HepG2 (cell line): ENCODE measurements at regions of chr11 and their contacts with region 1.

Region 1: GRCh38 chr11:32792948-32793475 is 1.4 kb downstream of the CCDC73 start:
- DNase-seq: peak; percentile 21
- ATAC-seq: peak; percentile 78
- H3K4me3 ChIP-seq: peak overlapping the region in 1 of 3 experiments; percentile 10; a peak in 1 of 6 replicates
- H3K27ac ChIP-seq: no peak overlapping the region
- H3K4me1 ChIP-seq: no peaks in the 10 kb centered on the region
- H3K27me3 ChIP-seq: peaks cover 0 to 5% of the 10 kb centered on the region in 2 experiments; a peak in 2 of 5 replicates
- CTCF ChIP-seq: peak; percentile 77
- EP300 ChIP-seq: no peak
- POLR2A ChIP-seq: no peak
- RAD21 ChIP-seq: peak; percentile 50; the same call in 1 of the 2 replicates

Region 2: GRCh38 chr11:32323814-32324130 is 469.2 kb before region 1 on chr11:
- CTCF ChIA-PET with region 1: interaction called, 4 read pairs
- POLR2A ChIA-PET with region 1: no interaction called
- in situ Hi-C with region 1: no loop called
- intact Hi-C with region 1: loop called (anchors 2 kb)
- DNase-seq: no peak
- ATAC-seq: no peak
- H3K4me3 ChIP-seq: no peak overlapping the region
- H3K27ac ChIP-seq: no peak overlapping the region
- H3K4me1 ChIP-seq: no peaks in the 10 kb centered on the region
- H3K27me3 ChIP-seq: peaks cover 0 to 20% of the 10 kb centered on the region in 2 experiments; a peak in 1 of 5 replicates
- CTCF ChIP-seq: no peak
- EP300 ChIP-seq: no peak
- POLR2A ChIP-seq: no peak
- RAD21 ChIP-seq: no peak

Region 3: GRCh38 chr11:32434356-32435151 is 358.5 kb before region 1 on chr11:
- CTCF ChIA-PET with region 1: interaction called, 3 read pairs
- POLR2A ChIA-PET with region 1: no interaction called
- in situ Hi-C with region 1: no loop called
- intact Hi-C with region 1: loop called (anchors 5 kb)
- DNase-seq: peak; percentile 5
- ATAC-seq: peak; percentile 83
- H3K4me3 ChIP-seq: peak overlapping the region; percentile 49 to 68 (median 57); a peak in 5 of 6 replicates
- H3K27ac ChIP-seq: no peak overlapping the region
- H3K4me1 ChIP-seq: 0 out of 2 replicates have a peak, but pooled peaks cover 7% of the 10 kb centered on the region
- H3K27me3 ChIP-seq: peaks cover 11 to 83% of the 10 kb centered on the region in 2 experiments
- CTCF ChIP-seq: peak; percentile 34
- EP300 ChIP-seq: no peak
- POLR2A ChIP-seq: no peak
- RAD21 ChIP-seq: no peak

Region 4: GRCh38 chr11:32448232-32448631 is 344.8 kb before region 1 on chr11:
- CTCF ChIA-PET with region 1: no interaction called
- POLR2A ChIA-PET with region 1: no interaction called
- in situ Hi-C with region 1: no loop called
- intact Hi-C with region 1: loop called (anchors 2 kb)
- DNase-seq: peak; percentile 31
- ATAC-seq: peak; percentile 69
- H3K4me3 ChIP-seq: no peak overlapping the region
- H3K27ac ChIP-seq: no peak overlapping the region
- H3K4me1 ChIP-seq: peaks cover 7% of the 10 kb centered on the region; the same call in 1 of the 2 replicates
- H3K27me3 ChIP-seq: peaks cover 0 to 2% of the 10 kb centered on the region in 2 experiments; a peak in 1 of 5 replicates
- CTCF ChIP-seq: 0 out of 2 replicates have a peak, but pooled peaks have one; percentile 13
- EP300 ChIP-seq: no peak
- POLR2A ChIP-seq: no peak
- RAD21 ChIP-seq: no peak

Region 5: DNA sequence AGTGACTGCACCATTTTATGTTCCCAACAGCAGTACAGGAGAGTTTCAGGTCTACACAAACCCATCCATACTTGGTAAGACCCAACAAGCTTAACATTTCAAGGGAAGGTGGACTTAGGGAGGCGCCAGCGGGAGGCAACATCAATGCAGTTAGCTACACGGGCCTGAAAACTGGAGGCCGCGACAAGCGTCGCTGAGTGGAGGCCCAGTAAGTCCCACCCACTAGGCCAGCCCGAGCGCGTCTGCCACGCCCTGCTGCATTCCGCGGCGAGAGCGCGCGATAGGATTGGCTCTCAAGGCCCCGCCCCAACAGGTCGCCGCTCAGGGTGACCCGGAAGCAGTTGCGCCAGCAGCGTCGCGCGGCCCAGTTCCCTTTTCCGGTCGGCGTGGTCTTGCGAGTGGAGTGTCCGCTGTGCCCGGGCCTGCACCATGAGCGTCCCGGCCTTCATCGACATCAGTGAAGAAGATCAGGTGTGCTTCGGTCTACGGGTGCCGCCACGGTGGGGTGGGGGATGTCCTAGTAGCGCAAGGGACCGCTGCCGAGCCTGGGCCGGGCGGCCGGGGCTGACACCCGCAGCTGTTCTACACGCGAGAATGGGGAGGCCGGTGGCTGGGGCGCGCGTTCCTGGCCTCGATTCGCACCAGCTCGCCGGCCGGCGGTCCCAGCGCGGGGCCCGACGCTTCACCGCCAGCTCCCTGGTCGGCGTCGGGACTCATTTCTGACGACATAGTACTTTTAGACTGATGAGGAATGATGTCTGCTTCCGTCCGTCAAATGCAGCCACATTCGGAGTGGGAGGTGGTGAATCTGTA is 209.3 kb before region 1 on chr11 and contains the start of gene EIF3M:
- CTCF ChIA-PET with region 1: no interaction called
- POLR2A ChIA-PET with region 1: no interaction called
- in situ Hi-C with region 1: no loop called
- intact Hi-C with region 1: loop called (anchors 1 kb)
- DNase-seq: peak; percentile 91
- ATAC-seq: peak; percentile 98
- H3K4me3 ChIP-seq: peak within 1 kb of the TSS; percentile 66 to 99 (median 88)
- H3K27ac ChIP-seq: peak within 1 kb of the TSS; percentile 82
- H3K4me1 ChIP-seq: peaks cover 48% of the 10 kb centered on the region
- H3K27me3 ChIP-seq: no peaks in the 10 kb centered on the region; a peak in 1 of 5 replicates
- CTCF ChIP-seq: no peak
- EP300 ChIP-seq: no peak
- POLR2A ChIP-seq: peak; percentile 83 to 85
- RAD21 ChIP-seq: no peak; the same call in 1 of the 2 replicates
- total RNA-seq, gene EIF3M: 389 and 593 TPM in 2 replicates

Region 6: GRCh38 chr11:32713496-32713895 is 79.5 kb before region 1 on chr11:
- CTCF ChIA-PET with region 1: interaction called, 5 read pairs
- POLR2A ChIA-PET with region 1: no interaction called
- in situ Hi-C with region 1: loop called (anchors 5 kb)
- intact Hi-C with region 1: loop called (anchors 1 kb)
- DNase-seq: no peak
- ATAC-seq: no peak
- H3K4me3 ChIP-seq: no peak overlapping the region
- H3K27ac ChIP-seq: no peak overlapping the region
- H3K4me1 ChIP-seq: no peaks in the 10 kb centered on the region
- H3K27me3 ChIP-seq: no peaks in the 10 kb centered on the region
- CTCF ChIP-seq: peak; percentile 21; the same call in 1 of the 2 replicates
- EP300 ChIP-seq: no peak
- POLR2A ChIP-seq: no peak
- RAD21 ChIP-seq: no peak

Region 7: DNA sequence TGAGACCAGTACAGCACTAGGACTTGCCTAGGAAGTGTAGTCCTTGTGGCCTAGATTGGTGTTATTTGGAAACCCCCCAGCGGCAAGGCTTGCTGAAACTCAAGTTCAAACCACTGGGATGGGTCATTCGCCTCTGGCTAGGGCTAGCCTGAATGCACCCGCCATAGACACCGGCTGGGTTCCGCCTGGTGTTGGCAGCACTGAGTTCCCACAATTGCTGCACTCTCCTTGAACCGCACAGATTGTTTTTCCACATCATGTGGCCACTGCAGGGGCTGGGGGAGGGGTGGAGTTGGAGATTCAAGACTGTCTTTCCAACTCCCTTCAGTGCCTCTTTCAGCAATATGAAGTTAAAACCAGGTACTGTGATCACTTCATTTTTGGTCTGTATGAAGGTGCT is 41.6 kb before region 1 on chr11:
- CTCF ChIA-PET with region 1: interaction called, 7 read pairs
- POLR2A ChIA-PET with region 1: no interaction called
- in situ Hi-C with region 1: no loop called
- intact Hi-C with region 1: loop called (anchors 1 kb)
- DNase-seq: no peak
- ATAC-seq: 0 out of 3 replicates have a peak, but pooled peaks have one; percentile 38
- H3K4me3 ChIP-seq: no peak overlapping the region
- H3K27ac ChIP-seq: no peak overlapping the region
- H3K4me1 ChIP-seq: no peaks in the 10 kb centered on the region
- H3K27me3 ChIP-seq: peaks cover 0 to 1% of the 10 kb centered on the region in 2 experiments; a peak in 1 of 5 replicates
- CTCF ChIP-seq: no peak
- EP300 ChIP-seq: no peak
- POLR2A ChIP-seq: no peak
- RAD21 ChIP-seq: no peak

Region 8: GRCh38 chr11:32858731-32859130 is 65.7 kb after region 1 on chr11:
- CTCF ChIA-PET with region 1: no interaction called
- POLR2A ChIA-PET with region 1: no interaction called
- in situ Hi-C with region 1: no loop called
- intact Hi-C with region 1: no loop called
- DNase-seq: no peak
- ATAC-seq: no peak
- H3K4me3 ChIP-seq: no peak overlapping the region
- H3K27ac ChIP-seq: no peak overlapping the region
- H3K4me1 ChIP-seq: peaks cover 22% of the 10 kb centered on the region
- H3K27me3 ChIP-seq: no peaks in the 10 kb centered on the region
- CTCF ChIP-seq: no peak
- EP300 ChIP-seq: no peak
- POLR2A ChIP-seq: no peak
- RAD21 ChIP-seq: no peak